ENCODE measurements at regions of chr10 and their contacts with region 1.

Region 1: DNA sequence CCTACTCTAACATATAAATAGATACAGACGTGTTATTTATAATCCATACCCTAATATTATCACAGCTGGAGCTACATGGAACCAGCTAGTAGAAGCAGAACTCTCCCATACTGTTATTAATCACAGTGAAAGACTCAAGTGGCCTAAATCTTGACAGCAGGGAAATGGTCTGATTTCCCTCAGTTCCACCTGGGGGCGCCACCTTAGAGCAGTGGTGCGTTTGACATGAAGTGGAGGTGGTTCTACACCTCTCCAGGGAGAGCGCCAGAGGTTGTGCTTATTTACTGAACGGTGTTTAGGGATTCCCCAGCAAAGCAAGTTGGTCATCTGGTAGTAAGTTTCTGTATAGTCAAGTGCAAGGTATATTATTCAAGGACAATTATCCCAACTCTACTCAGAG is 17.6 kb downstream of the DNTT start:
- H3K4me3 ChIP-seq: no peak overlapping the region
- H3K27ac ChIP-seq: no peak overlapping the region
- H3K4me1 ChIP-seq: no peaks in the 10 kb centered on the region
- CTCF ChIP-seq: no peak

Region 2: GRCh38 chr10:96244354-96244753 is 77.5 kb before region 1 on chr10:
- CTCF ChIA-PET with region 1: no interaction called
- POLR2A ChIA-PET with region 1: no interaction called
- H3K4me3 ChIP-seq: no peak overlapping the region
- H3K27ac ChIP-seq: no peak overlapping the region
- H3K4me1 ChIP-seq: no peaks in the 10 kb centered on the region
- CTCF ChIP-seq: no peak

Region 3: DNA sequence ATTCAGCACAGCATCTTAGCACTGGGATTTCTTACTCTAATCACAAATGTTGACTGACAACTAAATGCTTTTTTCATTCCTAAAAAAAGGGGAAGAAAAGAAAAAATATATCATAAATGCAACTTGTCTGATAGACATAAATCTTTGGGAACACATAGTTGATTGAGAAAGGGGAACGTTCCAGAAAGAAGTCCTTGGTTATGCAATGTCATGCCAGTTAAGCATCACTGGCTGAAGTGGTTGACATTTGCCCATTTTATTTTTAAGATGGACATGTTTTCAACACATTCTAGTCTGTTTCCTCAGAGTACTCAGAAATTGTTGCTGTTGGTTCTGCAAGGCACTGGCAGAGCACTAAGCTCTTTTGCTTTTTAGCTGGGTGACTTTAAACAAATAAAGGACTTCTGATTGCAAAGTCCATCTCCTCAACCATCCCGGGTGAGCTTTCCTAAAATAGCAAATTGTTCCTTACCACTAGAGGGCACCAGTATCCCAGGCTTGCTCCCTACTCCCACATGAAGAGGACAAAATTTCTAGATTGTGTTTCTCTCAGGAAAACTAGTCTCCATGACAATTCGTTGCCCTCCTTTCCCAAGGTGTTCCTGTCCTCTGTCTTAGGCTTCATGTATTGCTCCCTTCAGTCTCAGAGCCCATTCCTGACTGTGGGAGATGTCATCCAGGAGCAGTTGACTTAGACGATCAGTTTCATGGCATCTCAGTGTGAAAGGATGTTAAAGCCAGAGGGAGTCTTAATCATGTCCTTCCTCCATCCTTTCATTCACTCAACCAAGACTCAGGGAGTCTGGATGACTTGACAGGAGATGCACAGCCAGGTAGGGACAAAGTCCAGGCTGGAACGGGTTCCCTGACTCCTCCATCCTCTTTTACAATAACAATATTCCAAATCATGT is 13.0 kb after region 1 on chr10:
- CTCF ChIA-PET with region 1: interaction called, 27 read pairs
- POLR2A ChIA-PET with region 1: interaction called, 4 read pairs
- H3K4me3 ChIP-seq: no peak overlapping the region
- H3K27ac ChIP-seq: no peak overlapping the region
- H3K4me1 ChIP-seq: no peaks in the 10 kb centered on the region
- CTCF ChIP-seq: peak; percentile 23; the same call in 1 of the 2 replicates

Region 4: GRCh38 chr10:96339957-96340904 is 18.4 kb after region 1 on chr10:
- CTCF ChIA-PET with region 1: interaction called, 27 read pairs
- POLR2A ChIA-PET with region 1: interaction called, 4 read pairs
- H3K4me3 ChIP-seq: no peak overlapping the region
- H3K27ac ChIP-seq: no peak overlapping the region
- H3K4me1 ChIP-seq: no peaks in the 10 kb centered on the region
- CTCF ChIP-seq: peak; percentile 52; the same call in 1 of the 2 replicates

Measured in HEK293 (cell line).